CD8-positive, alpha-beta memory T cell (primary cell): ENCODE measurements at regions of chr2 and their contacts with region 1.

Region 1: GRCh38 chr2:215949991-215950404 is 63.4 kb downstream of the MREG start:
- DNase-seq: peak in 2 of 5 donors; percentile 7 to 12
- H3K4me3 ChIP-seq: no peak overlapping the region
- H3K4me3 Mint-ChIP-seq: no peak overlapping the region
- H3K27ac ChIP-seq: no peak overlapping the region
- H3K27ac Mint-ChIP-seq: no peak overlapping the region
- H3K4me1 ChIP-seq: no peaks in the 10 kb centered on the region
- H3K4me1 Mint-ChIP-seq: no peaks in the 10 kb centered on the region
- H3K27me3 ChIP-seq: no peaks in the 10 kb centered on the region
- H3K27me3 Mint-ChIP-seq: no peaks in the 10 kb centered on the region

Region 2: GRCh38 chr2:216023055-216023648 is 73.2 kb after region 1 on chr2:
- CTCF ChIA-PET with region 1: interaction called, 21 read pairs
- POLR2A ChIA-PET with region 1: interaction called, 3 read pairs
- DNase-seq: peak in 4 of 5 donors; percentile 19 to 30 (median 23)
- H3K4me3 ChIP-seq: no peak overlapping the region
- H3K4me3 Mint-ChIP-seq: no peak overlapping the region
- H3K27ac ChIP-seq: no peak overlapping the region
- H3K27ac Mint-ChIP-seq: peak overlapping the region in 2 of 8 donors; percentile 15 to 51
- H3K4me1 ChIP-seq: no peaks in the 10 kb centered on the region
- H3K4me1 Mint-ChIP-seq: peaks cover 5 to 8% (median 8%) of the 10 kb centered on the region in 3 donors
- H3K27me3 ChIP-seq: no peaks in the 10 kb centered on the region
- H3K27me3 Mint-ChIP-seq: no peaks in the 10 kb centered on the region

Region 3: DNA sequence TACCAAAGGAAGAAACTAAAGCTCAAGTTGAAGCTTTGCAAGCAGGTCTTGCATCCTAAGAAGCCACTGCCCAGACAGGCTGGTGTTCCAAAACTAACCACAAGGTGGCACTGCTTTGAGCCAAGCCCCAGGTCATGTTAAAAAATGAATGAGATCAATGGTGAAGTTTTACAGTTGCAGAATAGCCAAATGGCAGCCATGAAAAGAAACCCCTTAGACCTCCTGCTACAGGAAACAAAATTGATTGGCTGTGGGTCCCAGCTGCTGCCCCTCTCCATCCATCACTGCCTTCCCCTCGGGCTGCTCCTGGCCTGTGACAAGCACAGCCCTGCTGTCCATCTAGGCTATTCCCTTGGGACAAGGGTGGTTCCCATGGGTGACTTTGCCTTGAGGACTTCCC is 84.1 kb after region 1 on chr2:
- CTCF ChIA-PET with region 1: no interaction called
- POLR2A ChIA-PET with region 1: no interaction called
- DNase-seq: peak; percentile 57 to 82 (median 60)
- H3K4me3 ChIP-seq: no peak overlapping the region
- H3K4me3 Mint-ChIP-seq: no peak overlapping the region
- H3K27ac ChIP-seq: no peak overlapping the region
- H3K27ac Mint-ChIP-seq: no peak overlapping the region
- H3K4me1 ChIP-seq: no peaks in the 10 kb centered on the region
- H3K4me1 Mint-ChIP-seq: peaks cover 3 to 8% (median 3%) of the 10 kb centered on the region in 3 donors
- H3K27me3 ChIP-seq: no peaks in the 10 kb centered on the region
- H3K27me3 Mint-ChIP-seq: no peaks in the 10 kb centered on the region

Region 4: GRCh38 chr2:216057688-216058193 is 107.7 kb after region 1 on chr2:
- CTCF ChIA-PET with region 1: no interaction called
- POLR2A ChIA-PET with region 1: no interaction called
- DNase-seq: peak; percentile 28 to 78 (median 71)
- H3K4me3 ChIP-seq: peak overlapping the region; percentile 50
- H3K4me3 Mint-ChIP-seq: peak overlapping the region; percentile 29 to 86 (median 82)
- H3K27ac ChIP-seq: peak overlapping the region; percentile 66
- H3K27ac Mint-ChIP-seq: peak overlapping the region; percentile 84 to 99 (median 98)
- H3K4me1 ChIP-seq: peaks cover 20% of the 10 kb centered on the region
- H3K4me1 Mint-ChIP-seq: peaks cover 31 to 41% (median 37%) of the 10 kb centered on the region in 3 donors
- H3K27me3 ChIP-seq: no peaks in the 10 kb centered on the region
- H3K27me3 Mint-ChIP-seq: no peaks in the 10 kb centered on the region